ENCODE measurements at regions of chr1 and their contacts with region 1.

Region 1: DNA sequence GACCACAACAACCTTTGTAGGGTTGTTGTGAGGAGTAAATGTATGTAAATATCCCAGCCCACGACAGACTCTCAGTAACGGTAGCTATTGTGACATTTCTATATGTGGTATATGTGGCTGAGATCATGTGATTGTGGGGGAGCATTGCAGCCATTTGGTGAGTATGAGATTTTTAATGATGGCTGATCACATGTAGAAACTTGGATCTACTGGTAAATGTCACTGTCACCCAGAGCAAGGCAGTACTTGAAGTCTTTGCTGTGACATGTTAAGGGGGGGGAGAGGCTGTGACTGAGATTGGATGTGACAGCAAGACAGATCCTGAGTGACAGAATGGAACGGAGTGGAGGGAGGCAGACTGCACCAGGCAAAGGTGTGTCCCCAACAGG is 23.9 kb upstream of the MEF2D start:
- DNase-seq: peak; percentile 62
- ATAC-seq: peak; percentile 76
- H3K4me3 Mint-ChIP-seq: peak overlapping the region; percentile 60
- H3K27ac Mint-ChIP-seq: peak overlapping the region; percentile 92
- H3K4me1 Mint-ChIP-seq: peaks cover 48% of the 10 kb centered on the region
- H3K27me3 Mint-ChIP-seq: no peaks in the 10 kb centered on the region

Region 2: GRCh38 chr1:156489166-156489934 is 35.1 kb before region 1 on chr1:
- CTCF ChIA-PET with region 1: interaction called, 11 read pairs
- POLR2A ChIA-PET with region 1: interaction called, 4 read pairs
- DNase-seq: peak; percentile 55
- ATAC-seq: peak; percentile 53
- H3K4me3 Mint-ChIP-seq: peak overlapping the region; percentile 62
- H3K27ac Mint-ChIP-seq: peak overlapping the region; percentile 85
- H3K4me1 Mint-ChIP-seq: peaks cover 81% of the 10 kb centered on the region
- H3K27me3 Mint-ChIP-seq: no peaks in the 10 kb centered on the region

Region 3: GRCh38 chr1:156508163-156508887 is 16.1 kb before region 1 on chr1:
- CTCF ChIA-PET with region 1: interaction called, 19 read pairs
- POLR2A ChIA-PET with region 1: interaction called, 99 read pairs
- DNase-seq: no peak
- ATAC-seq: no peak
- H3K4me3 Mint-ChIP-seq: peak overlapping the region; percentile 77
- H3K27ac Mint-ChIP-seq: peak overlapping the region; percentile 91
- H3K4me1 Mint-ChIP-seq: peaks cover 61% of the 10 kb centered on the region
- H3K27me3 Mint-ChIP-seq: peaks cover 3% of the 10 kb centered on the region

Region 4: GRCh38 chr1:156592158-156592909 is 67.9 kb after region 1 on chr1:
- CTCF ChIA-PET with region 1: no interaction called
- POLR2A ChIA-PET with region 1: no interaction called
- DNase-seq: no peak
- ATAC-seq: no peak
- H3K4me3 Mint-ChIP-seq: peak overlapping the region; percentile 82
- H3K27ac Mint-ChIP-seq: peak overlapping the region; percentile 79
- H3K4me1 Mint-ChIP-seq: peaks cover 24% of the 10 kb centered on the region
- H3K27me3 Mint-ChIP-seq: no peaks in the 10 kb centered on the region

Measured in activated CD8-positive, alpha-beta T cell treated with anti-CD3 and anti-CD28 coated beads, Interleukin-2, amount 10 ng/mL, durations not matched to agents 7 days and 5 days (primary cell).